Esophagus muscularis mucosa (tissue), 4 donors: ENCODE measurements at regions of chr7 and their contacts with region 1.

Region 1: DNA sequence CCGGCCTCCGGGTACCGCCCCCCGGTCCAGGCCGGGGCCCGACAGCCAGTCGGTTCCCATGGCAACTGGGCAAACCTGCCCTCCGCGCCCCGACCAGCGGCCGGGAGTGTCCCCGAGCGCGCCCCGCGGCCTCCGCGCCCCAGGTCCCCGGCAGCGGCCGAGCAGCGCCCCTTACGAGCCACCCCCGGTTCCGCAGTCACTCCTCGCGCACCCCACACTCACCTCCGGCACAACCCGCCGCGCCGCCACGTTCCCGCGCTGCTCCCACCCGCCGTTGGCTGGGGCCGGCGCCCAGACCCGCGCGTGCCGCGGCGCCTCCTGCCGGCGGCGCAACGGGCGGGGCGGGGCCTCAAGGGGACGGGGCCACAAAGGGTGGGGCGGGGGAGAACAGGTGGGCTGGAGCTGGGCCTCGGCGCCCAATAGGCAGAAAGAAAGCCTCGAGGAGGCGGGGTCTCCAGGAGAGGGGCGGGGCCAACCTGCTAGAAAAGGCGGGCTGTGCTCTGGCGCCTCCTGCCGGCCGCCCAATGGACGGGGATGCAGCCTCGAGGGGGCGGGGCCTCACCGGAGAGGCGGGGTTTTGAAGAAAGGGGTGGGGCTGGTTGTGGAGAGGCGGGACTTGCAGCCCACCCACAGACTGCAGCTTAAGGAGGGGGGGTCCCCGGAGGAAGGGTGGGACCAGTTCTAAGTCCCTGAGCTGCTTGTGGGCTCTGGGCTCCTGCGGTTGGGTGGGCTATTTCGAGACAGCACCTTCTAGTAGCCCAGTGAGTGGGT is at the start of gene RADIL:
- DNase-seq: peak; percentile 97
- H3K4me3 ChIP-seq: peak within 1 kb of the TSS; percentile 64 to 79 (median 72)
- H3K27ac ChIP-seq: peak within 1 kb of the TSS; percentile 74 to 83 (median 77)
- H3K4me1 ChIP-seq: peaks cover 10 to 46% (median 34%) of the 10 kb centered on the region in 4 donors
- H3K27me3 ChIP-seq: peaks cover 0 to 19% (median 0%) of the 10 kb centered on the region in 4 donors
- CTCF ChIP-seq: peak; percentile 77 to 88 (median 81)
- EP300 ChIP-seq: no peak
- POLR2A ChIP-seq: no peak
- total RNA-seq, gene RADIL: 6.5 to 12.9 (median 12.1) TPM

Region 2: GRCh38 chr7:4830176-4830575 is 53.4 kb before region 1 on chr7:
- intact Hi-C with region 1: loop called (anchors 5 kb)
- DNase-seq: no peak
- H3K4me3 ChIP-seq: no peak overlapping the region
- H3K27ac ChIP-seq: no peak overlapping the region
- H3K4me1 ChIP-seq: no peaks in the 10 kb centered on the region
- H3K27me3 ChIP-seq: no peaks in the 10 kb centered on the region
- CTCF ChIP-seq: peak; percentile 60 to 70 (median 68)
- EP300 ChIP-seq: no peak
- POLR2A ChIP-seq: no peak

Region 3: DNA sequence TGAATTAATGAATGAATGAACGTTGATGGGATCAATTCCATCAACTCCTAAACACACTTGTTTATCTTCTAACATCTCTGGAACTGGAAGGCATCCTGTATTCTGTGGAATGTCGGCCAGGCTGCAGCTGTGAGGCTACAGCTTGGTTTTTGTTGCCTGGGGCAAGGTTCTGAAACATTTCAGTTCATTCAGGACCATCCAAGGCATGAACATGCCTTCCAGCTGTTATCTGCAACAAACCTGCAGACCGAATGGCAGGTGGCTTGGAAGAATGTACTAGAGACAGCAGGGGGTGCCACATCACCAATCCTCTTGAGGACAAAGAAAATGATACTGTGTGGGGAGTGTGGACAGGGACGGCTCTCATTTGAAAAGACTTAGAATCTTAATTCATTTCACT is 34.2 kb before region 1 on chr7:
- intact Hi-C with region 1: loop called (anchors 5 kb)
- DNase-seq: no peak
- H3K4me3 ChIP-seq: no peak overlapping the region
- H3K27ac ChIP-seq: no peak overlapping the region
- H3K4me1 ChIP-seq: peaks cover 0 to 6% (median 0%) of the 10 kb centered on the region in 4 donors
- H3K27me3 ChIP-seq: no peaks in the 10 kb centered on the region
- CTCF ChIP-seq: peak in 2 of 3 experiments; percentile 26 to 38
- EP300 ChIP-seq: no peak
- POLR2A ChIP-seq: no peak